Heart right ventricle (tissue), 16 donors: ENCODE measurements at regions of chr3 and their contacts with region 1.

Region 1: DNA sequence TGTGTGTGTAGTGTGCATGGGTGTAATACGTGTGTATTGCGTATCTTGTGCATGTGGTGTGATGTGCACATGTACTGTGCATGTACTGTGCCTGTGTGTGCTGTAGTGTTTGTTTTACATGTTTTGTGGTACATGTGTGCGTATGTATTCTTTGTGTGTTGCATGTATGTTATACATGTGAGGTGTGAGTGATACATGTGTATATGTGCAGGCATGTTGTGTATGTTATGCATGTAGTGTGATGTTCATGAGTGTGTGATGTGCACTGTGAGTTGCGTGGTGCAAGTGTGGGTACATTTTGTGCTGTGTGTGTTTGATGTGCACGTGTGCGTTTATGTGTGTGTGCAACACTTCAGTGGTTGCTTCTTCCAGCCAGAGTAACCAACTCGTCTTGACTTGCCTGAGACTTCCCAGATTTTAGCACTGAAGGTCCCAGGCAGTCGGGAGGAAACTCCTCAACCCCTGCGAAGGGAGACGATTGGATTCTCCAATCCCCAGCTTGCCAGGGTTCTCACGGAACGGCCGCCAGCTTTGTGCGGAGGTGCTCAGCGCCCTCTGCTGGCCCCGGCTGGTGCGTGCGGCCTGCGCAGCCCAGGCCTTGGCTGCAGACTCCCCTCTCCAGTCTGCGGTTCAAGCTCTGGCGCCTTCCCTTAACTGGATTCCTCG is 3.6 kb downstream of the GALNT15 start:
- DNase-seq: peak; percentile 72 to 86
- ATAC-seq: peak; percentile 73 to 83 (median 78)
- H3K4me3 ChIP-seq: peak overlapping the region in 6 of 10 donors; percentile 23 to 42 (median 36)
- H3K27ac ChIP-seq: no peak overlapping the region
- H3K4me1 ChIP-seq: peaks cover 0 to 58% (median 35%) of the 10 kb centered on the region in 9 donors
- H3K27me3 ChIP-seq: peaks cover 0 to 7% (median 0%) of the 10 kb centered on the region in 7 donors
- CTCF ChIP-seq: peak; percentile 94 to 99 (median 98)

Region 2: GRCh38 chr3:16130066-16130465 is 48.0 kb before region 1 on chr3:
- intact Hi-C with region 1: loop called in 1 of 10 experiments (anchors 5 kb)
- DNase-seq: no peak
- ATAC-seq: peak in 4 of 8 donors; percentile 19 to 52 (median 34)
- H3K4me3 ChIP-seq: no peak overlapping the region
- H3K27ac ChIP-seq: peak overlapping the region in 5 of 10 donors; percentile 15 to 44 (median 32)
- H3K4me1 ChIP-seq: peaks cover 0 to 46% (median 30%) of the 10 kb centered on the region in 9 donors
- H3K27me3 ChIP-seq: no peaks in the 10 kb centered on the region
- CTCF ChIP-seq: no peak

Region 3: GRCh38 chr3:16247276-16248061 is 69.4 kb after region 1 on chr3:
- intact Hi-C with region 1: loop called in 8 of 10 experiments (anchors 2 to 10 kb)
- DNase-seq: peak; percentile 63 to 84
- ATAC-seq: peak; percentile 24 to 83 (median 72)
- H3K4me3 ChIP-seq: no peak overlapping the region
- H3K27ac ChIP-seq: no peak overlapping the region
- H3K4me1 ChIP-seq: peaks cover 0 to 27% (median 16%) of the 10 kb centered on the region in 9 donors
- H3K27me3 ChIP-seq: no peaks in the 10 kb centered on the region
- CTCF ChIP-seq: peak; percentile 85 to 98 (median 94)